Ascending aorta (tissue), 2 donors: ENCODE measurements at regions of chr11 and their contacts with region 1.

Region 1: DNA sequence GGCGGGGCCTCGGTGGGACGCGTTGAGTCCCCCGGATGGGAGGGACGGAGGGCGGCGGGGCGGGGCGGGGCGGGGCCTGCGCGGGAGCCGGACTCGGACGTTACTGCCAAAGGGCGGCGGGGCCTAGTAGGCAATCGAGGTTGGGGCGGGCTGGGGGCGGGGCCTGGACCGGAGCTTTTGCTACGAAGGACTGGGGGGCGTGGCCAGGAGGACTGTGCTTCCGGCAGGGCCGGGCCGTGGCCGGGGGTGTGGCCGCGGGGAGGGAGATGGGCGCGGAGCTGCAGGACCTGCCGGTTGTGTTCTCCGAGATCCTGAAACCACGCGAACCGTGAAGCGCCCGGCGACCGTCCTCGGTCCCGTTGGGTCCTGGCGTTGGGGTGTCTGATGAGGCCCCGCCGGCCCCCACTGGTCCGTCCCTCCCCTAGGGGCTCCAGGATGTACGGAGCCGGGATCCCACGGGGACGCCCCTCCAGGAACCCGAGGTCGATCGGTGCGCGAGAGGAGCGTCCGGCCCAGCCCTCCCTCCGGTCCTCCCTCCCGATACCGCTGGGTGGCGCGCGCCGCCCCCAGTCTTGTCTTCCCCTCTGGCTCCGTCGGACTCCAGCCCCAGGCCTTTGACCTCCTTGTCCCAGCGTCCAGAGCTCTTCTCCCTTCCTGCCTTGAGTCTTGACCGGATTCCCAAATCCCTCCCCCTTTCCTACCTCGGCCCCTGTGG is 648 bp upstream of the NUDT8 start:
- DNase-seq: peak; percentile 90 to 99
- H3K4me3 ChIP-seq: peak overlapping the region; percentile 65 to 80
- H3K27ac ChIP-seq: peak overlapping the region; percentile 81 to 92
- H3K4me1 ChIP-seq: peaks cover 4 to 6% of the 10 kb centered on the region in 2 donors
- H3K27me3 ChIP-seq: no peaks in the 10 kb centered on the region
- CTCF ChIP-seq: peak; percentile 78 to 83 (median 79)

Region 2: DNA sequence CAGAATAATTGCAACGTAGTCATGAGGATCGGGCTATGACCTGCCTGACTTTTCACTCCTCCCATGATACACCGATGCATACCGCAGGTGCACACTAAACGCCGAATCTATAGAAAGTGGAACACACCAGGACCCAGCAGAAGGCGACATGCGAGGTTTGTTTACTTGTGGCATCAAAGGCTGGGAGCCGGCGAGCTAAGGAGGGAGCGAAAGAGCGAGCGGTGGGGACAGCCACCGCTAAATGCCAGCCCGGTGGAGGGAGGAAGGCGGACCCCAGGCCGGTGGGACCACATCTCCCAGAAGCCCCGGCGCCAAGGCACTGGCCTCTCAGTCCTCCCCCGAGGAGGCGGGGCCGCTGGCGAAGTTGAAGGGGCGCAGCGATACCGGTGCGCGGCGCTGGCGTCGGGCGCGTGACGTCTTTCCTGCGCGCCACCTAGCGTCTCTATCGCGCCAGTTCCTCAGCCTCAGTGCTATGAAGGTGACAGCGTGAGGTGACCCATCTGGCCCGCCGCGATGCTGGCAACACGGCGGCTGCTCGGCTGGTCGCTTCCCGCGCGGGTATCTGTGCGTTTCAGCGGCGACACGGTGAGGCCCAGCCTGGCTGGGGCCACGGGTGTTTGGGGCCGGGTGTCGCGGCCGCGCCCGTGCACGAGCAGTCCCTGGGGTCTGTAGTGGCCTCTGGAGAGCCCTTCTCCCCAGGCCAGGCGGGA is 23.7 kb before region 1 on chr11 and contains the start of gene NDUFV1:
- intact Hi-C with region 1: loop called (anchors 1 kb)
- DNase-seq: peak; percentile 86 to 99
- H3K4me3 ChIP-seq: peak within 1 kb of the TSS; percentile 96 to 99
- H3K27ac ChIP-seq: peak within 1 kb of the TSS; percentile 66 to 78
- H3K4me1 ChIP-seq: peaks cover 7 to 22% of the 10 kb centered on the region in 2 donors
- H3K27me3 ChIP-seq: no peaks in the 10 kb centered on the region
- CTCF ChIP-seq: peak; percentile 66 to 83 (median 68)
- total RNA-seq, gene NDUFV1: 128 TPM

Region 3: GRCh38 chr11:67656278-67656922 is 26.0 kb after region 1 on chr11:
- intact Hi-C with region 1: loop called (anchors 1 kb)
- DNase-seq: no peak
- H3K4me3 ChIP-seq: no peak overlapping the region
- H3K27ac ChIP-seq: peak overlapping the region in 1 of 2 donors; percentile 72
- H3K4me1 ChIP-seq: peaks cover 0 to 9% of the 10 kb centered on the region in 2 donors
- H3K27me3 ChIP-seq: no peaks in the 10 kb centered on the region
- CTCF ChIP-seq: no peak

Region 4: DNA sequence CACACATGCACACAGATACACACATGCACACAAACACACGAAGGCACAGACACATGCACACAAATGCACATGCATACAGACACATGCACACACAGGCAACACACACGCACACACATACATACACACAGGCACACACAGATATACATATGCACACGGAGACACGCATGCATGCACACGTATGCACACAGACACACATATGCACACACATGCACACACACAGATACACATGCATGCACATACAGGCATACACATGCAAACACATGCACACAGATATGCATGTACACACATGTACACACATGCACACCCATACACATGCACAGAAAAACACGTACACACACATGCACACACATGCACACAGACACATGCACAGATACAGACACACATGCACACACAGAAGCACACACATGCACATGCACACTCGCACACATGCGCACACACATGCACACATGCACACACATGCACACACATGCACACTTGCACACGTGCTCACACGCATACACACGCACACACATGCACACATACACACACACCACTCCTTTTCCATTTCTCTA is 114.9 kb after region 1 on chr11:
- intact Hi-C with region 1: no loop called
- DNase-seq: no peak
- H3K4me3 ChIP-seq: no peak overlapping the region
- H3K27ac ChIP-seq: no peak overlapping the region
- H3K4me1 ChIP-seq: no peaks in the 10 kb centered on the region
- H3K27me3 ChIP-seq: no peaks in the 10 kb centered on the region
- CTCF ChIP-seq: no peak